ENCODE measurements at regions of chr3 and their contacts with region 1.

Region 1: DNA sequence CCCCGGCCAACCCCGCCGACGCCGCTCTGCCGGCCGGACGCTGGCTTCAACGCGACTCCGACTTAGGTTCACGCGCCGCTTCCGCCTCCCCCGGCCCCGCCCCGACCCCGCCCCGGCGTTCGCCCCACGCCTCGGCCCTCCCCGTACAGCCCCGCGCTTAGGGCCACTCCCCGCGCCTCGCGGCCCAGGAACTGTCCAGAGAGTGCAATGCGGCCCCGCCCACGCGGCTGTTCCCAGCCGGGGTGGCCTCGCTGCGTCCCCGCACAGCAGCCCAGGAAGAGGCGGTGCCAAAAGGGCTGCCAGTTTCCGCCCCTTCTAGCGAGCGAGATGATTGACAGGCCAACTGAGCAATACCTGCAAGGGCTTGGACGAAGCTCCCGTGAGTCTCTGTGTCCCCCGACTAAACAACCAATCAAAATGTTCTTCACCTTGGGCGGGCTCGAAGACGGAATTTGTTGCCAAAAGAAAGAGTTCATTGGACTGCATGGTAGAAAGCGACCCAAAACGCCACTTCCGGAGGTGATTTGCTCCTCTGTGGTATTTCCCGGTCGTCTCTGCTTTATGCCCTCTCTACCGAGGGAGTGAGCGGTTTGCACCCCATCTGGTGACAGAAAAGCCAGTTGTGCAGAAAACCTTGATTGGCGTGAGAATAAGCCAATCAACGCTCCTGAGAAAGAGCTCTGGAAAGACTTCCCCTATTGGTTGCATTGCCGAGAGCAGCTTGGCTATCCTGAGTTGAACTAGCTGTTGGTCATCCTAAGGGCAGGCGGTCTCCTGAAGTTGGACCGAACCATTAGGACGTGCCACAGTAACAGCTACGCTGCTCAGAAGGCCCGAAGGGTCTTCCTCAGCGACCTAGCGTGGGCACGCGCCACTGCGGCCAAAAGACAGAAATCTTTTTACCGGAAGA is at the start of gene UBP1:
- DNase-seq: peak; percentile 99
- H3K4me3 Mint-ChIP-seq: peak within 1 kb of the TSS; percentile 99
- H3K27ac Mint-ChIP-seq: peak within 1 kb of the TSS; percentile 100
- H3K4me1 Mint-ChIP-seq: peaks cover 45% of the 10 kb centered on the region
- H3K27me3 Mint-ChIP-seq: no peaks in the 10 kb centered on the region
- total RNA-seq, gene UBP1: 56.1 to 59.8 TPM

Region 2: GRCh38 chr3:33277193-33277882 is 163.2 kb before region 1 on chr3 and contains the start of gene FBXL2:
- CTCF ChIA-PET with region 1: no interaction called
- POLR2A ChIA-PET with region 1: no interaction called
- DNase-seq: no peak
- H3K4me3 Mint-ChIP-seq: peak within 1 kb of the TSS; percentile 46
- H3K27ac Mint-ChIP-seq: no peak within 1 kb of the TSS
- H3K4me1 Mint-ChIP-seq: no peaks in the 10 kb centered on the region
- H3K27me3 Mint-ChIP-seq: peaks cover 23% of the 10 kb centered on the region
- total RNA-seq, gene FBXL2: not detected

Region 3: GRCh38 chr3:33426068-33426467 is 14.5 kb before region 1 on chr3:
- CTCF ChIA-PET with region 1: interaction called, 11 read pairs
- POLR2A ChIA-PET with region 1: interaction called, 28 read pairs
- DNase-seq: no peak
- H3K4me3 Mint-ChIP-seq: no peak overlapping the region
- H3K27ac Mint-ChIP-seq: no peak overlapping the region
- H3K4me1 Mint-ChIP-seq: peaks cover 37% of the 10 kb centered on the region
- H3K27me3 Mint-ChIP-seq: no peaks in the 10 kb centered on the region

Region 4: DNA sequence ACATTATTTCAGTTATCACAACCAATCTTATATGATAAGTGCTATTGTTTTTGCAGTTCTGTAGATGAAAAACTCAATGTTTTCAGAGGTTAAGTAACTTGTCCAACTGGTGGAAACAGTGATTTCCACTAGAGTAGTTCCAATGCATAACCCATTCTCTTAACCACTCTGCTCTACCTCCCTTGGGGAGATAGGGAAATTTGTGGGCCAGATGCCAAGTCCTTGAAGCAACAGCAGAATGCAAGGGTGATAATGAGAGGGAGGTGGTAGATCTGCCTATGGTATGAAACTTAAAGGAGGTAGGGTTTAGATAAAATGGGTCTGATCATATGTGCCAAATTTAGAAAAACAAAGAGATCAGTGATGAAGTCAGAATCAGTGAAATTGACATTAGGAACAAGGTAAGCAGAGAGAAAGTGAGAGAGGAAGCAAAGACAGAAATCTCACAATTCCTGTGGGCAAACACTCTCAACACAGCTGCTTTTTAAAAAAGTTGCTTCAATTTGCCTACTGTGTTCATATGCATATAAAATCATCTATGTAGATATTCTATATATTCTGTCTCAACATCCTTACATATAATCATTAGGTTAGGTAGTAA is 50.2 kb after region 1 on chr3:
- CTCF ChIA-PET with region 1: no interaction called
- POLR2A ChIA-PET with region 1: no interaction called
- DNase-seq: no peak
- H3K4me3 Mint-ChIP-seq: no peak overlapping the region
- H3K27ac Mint-ChIP-seq: no peak overlapping the region
- H3K4me1 Mint-ChIP-seq: no peaks in the 10 kb centered on the region
- H3K27me3 Mint-ChIP-seq: no peaks in the 10 kb centered on the region

Region 5: DNA sequence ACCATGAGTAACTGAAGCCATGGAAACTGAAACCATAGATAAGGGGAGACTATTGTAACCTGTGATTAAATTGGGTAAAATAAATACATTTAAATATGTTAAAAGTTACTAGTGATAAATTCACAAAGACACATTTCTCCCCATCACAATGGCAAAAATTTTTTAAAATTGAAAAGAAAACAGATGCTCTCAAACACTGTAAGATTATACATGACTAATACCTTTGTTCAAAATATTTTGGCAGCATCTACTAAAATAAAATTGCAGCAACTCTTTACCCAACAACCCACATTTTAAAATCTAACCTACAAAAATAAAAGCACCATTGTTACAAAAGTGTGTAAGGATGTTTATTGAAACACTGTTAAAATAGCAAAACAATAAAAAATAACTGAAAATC is 184.2 kb after region 1 on chr3:
- CTCF ChIA-PET with region 1: no interaction called
- POLR2A ChIA-PET with region 1: no interaction called
- DNase-seq: no peak
- H3K4me3 Mint-ChIP-seq: no peak overlapping the region
- H3K27ac Mint-ChIP-seq: no peak overlapping the region
- H3K4me1 Mint-ChIP-seq: no peaks in the 10 kb centered on the region
- H3K27me3 Mint-ChIP-seq: no peaks in the 10 kb centered on the region

Region 6: GRCh38 chr3:33717866-33718594 is 277.5 kb after region 1 on chr3 and contains the start of gene CLASP2:
- CTCF ChIA-PET with region 1: interaction called, 3 read pairs
- POLR2A ChIA-PET with region 1: interaction called, 15 read pairs
- DNase-seq: peak; percentile 84
- H3K4me3 Mint-ChIP-seq: peak within 1 kb of the TSS; percentile 89
- H3K27ac Mint-ChIP-seq: peak within 1 kb of the TSS; percentile 80
- H3K4me1 Mint-ChIP-seq: peaks cover 14% of the 10 kb centered on the region
- H3K27me3 Mint-ChIP-seq: peaks cover 2% of the 10 kb centered on the region
- total RNA-seq, gene CLASP2: 40.6 to 43.0 TPM

Region 7: GRCh38 chr3:33798411-33799201 is 358.0 kb after region 1 on chr3 and contains the start of gene PDCD6IP:
- CTCF ChIA-PET with region 1: interaction called, 5 read pairs
- POLR2A ChIA-PET with region 1: interaction called, 42 read pairs
- DNase-seq: peak; percentile 91
- H3K4me3 Mint-ChIP-seq: peak within 1 kb of the TSS; percentile 84
- H3K27ac Mint-ChIP-seq: peak within 1 kb of the TSS; percentile 83
- H3K4me1 Mint-ChIP-seq: peaks cover 53% of the 10 kb centered on the region
- H3K27me3 Mint-ChIP-seq: peaks cover 5% of the 10 kb centered on the region
- total RNA-seq, gene PDCD6IP: 211 TPM

Measured in activated CD4-positive, alpha-beta memory T cell treated with anti-CD3 and anti-CD28 coated beads, Interleukin-2, amount 10 ng/mL, durations not matched to agents 7 days and 5 days (primary cell).